ENCODE measurements at regions of chr5 and their contacts with region 1.

Region 1: GRCh38 chr5:40688127-40688761 is 8.5 kb downstream of the PTGER4 start:
- DNase-seq: peak; percentile 75 to 94 (median 84)
- ATAC-seq: peak; percentile 75
- H3K4me3 ChIP-seq: peak overlapping the region; percentile 91
- H3K4me3 Mint-ChIP-seq: peak overlapping the region; percentile 99
- H3K27ac ChIP-seq: peak overlapping the region in 1 of 2 donors; percentile 38
- H3K27ac Mint-ChIP-seq: peak overlapping the region; percentile 84
- H3K4me1 ChIP-seq: peaks cover 32% of the 10 kb centered on the region
- H3K4me1 Mint-ChIP-seq: peaks cover 84% of the 10 kb centered on the region
- H3K27me3 ChIP-seq: no peaks in the 10 kb centered on the region
- H3K27me3 Mint-ChIP-seq: no peaks in the 10 kb centered on the region
- CTCF ChIP-seq: peak; percentile 87

Region 2: DNA sequence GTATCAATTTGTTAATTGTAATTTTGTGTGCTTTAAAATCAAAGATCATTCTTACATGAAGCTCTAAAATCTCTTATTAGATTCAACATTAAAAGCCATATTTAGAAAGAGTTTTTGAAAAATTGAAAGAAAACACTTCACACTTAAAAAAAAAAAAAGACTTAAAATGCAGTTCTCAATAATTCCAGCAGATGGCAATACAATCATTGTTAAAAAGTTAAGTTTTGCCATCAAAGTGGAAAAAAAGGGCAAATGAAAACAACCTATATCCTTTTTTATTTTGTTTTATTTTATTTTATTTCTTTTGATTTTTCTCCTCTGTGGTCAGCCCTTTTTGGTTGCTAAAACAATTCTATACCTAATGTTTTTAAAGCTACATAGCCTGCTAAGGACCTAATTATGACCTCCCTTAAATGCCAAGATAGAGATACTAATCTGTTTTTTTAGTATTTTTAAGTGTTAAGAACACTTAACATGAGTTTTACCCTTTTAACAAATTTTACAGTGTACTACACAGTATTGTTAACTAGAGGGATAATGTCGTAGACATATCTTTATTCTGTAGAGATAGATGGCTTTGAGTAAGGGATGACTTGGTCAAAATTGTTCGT is 1109.3 kb before region 1 on chr5:
- CTCF ChIA-PET with region 1: no interaction called
- POLR2A ChIA-PET with region 1: no interaction called
- intact Hi-C with region 1: loop called in 1 of 2 experiments (anchors 2 kb)
- DNase-seq: peak in 3 of 14 experiments; percentile 21 to 52 (median 31)
- ATAC-seq: no peak
- H3K4me3 ChIP-seq: no peak overlapping the region
- H3K4me3 Mint-ChIP-seq: no peak overlapping the region
- H3K27ac ChIP-seq: no peak overlapping the region
- H3K27ac Mint-ChIP-seq: no peak overlapping the region
- H3K4me1 ChIP-seq: no peaks in the 10 kb centered on the region
- H3K4me1 Mint-ChIP-seq: peaks cover 10% of the 10 kb centered on the region
- H3K27me3 ChIP-seq: no peaks in the 10 kb centered on the region
- H3K27me3 Mint-ChIP-seq: peaks cover 6% of the 10 kb centered on the region
- CTCF ChIP-seq: peak; percentile 91

Region 3: GRCh38 chr5:39948867-39949468 is 739.3 kb before region 1 on chr5:
- CTCF ChIA-PET with region 1: interaction called, 4 read pairs
- POLR2A ChIA-PET with region 1: no interaction called
- intact Hi-C with region 1: loop called (anchors 1 kb)
- DNase-seq: peak; percentile 7 to 85 (median 50)
- ATAC-seq: peak; percentile 77
- H3K4me3 ChIP-seq: no peak overlapping the region
- H3K4me3 Mint-ChIP-seq: no peak overlapping the region
- H3K27ac ChIP-seq: no peak overlapping the region
- H3K27ac Mint-ChIP-seq: no peak overlapping the region
- H3K4me1 ChIP-seq: no peaks in the 10 kb centered on the region
- H3K4me1 Mint-ChIP-seq: peaks cover 5% of the 10 kb centered on the region
- H3K27me3 ChIP-seq: no peaks in the 10 kb centered on the region
- H3K27me3 Mint-ChIP-seq: no peaks in the 10 kb centered on the region
- CTCF ChIP-seq: peak; percentile 72

Region 4: GRCh38 chr5:40367255-40367654 is 321.0 kb before region 1 on chr5:
- CTCF ChIA-PET with region 1: interaction called, 7 read pairs
- POLR2A ChIA-PET with region 1: interaction called, 3 read pairs
- intact Hi-C with region 1: loop called (anchors 1 to 5 kb)
- DNase-seq: peak in 5 of 14 experiments; percentile 19 to 74 (median 43)
- ATAC-seq: peak; percentile 66
- H3K4me3 ChIP-seq: no peak overlapping the region
- H3K4me3 Mint-ChIP-seq: no peak overlapping the region
- H3K27ac ChIP-seq: no peak overlapping the region
- H3K27ac Mint-ChIP-seq: peak overlapping the region; percentile 17
- H3K4me1 ChIP-seq: no peaks in the 10 kb centered on the region
- H3K4me1 Mint-ChIP-seq: peaks cover 7% of the 10 kb centered on the region
- H3K27me3 ChIP-seq: no peaks in the 10 kb centered on the region
- H3K27me3 Mint-ChIP-seq: no peaks in the 10 kb centered on the region
- CTCF ChIP-seq: no peak

Region 5: GRCh38 chr5:40437452-40437861 is 250.8 kb before region 1 on chr5:
- CTCF ChIA-PET with region 1: interaction called, 6 read pairs
- POLR2A ChIA-PET with region 1: interaction called, 4 read pairs
- intact Hi-C with region 1: loop called in 1 of 2 experiments (anchors 5 kb)
- DNase-seq: peak in 5 of 14 experiments; percentile 5 to 74 (median 58)
- ATAC-seq: no peak
- H3K4me3 ChIP-seq: no peak overlapping the region
- H3K4me3 Mint-ChIP-seq: no peak overlapping the region
- H3K27ac ChIP-seq: peak overlapping the region; percentile 32 to 48
- H3K27ac Mint-ChIP-seq: peak overlapping the region; percentile 79
- H3K4me1 ChIP-seq: peaks cover 41% of the 10 kb centered on the region
- H3K4me1 Mint-ChIP-seq: peaks cover 68% of the 10 kb centered on the region
- H3K27me3 ChIP-seq: no peaks in the 10 kb centered on the region
- H3K27me3 Mint-ChIP-seq: no peaks in the 10 kb centered on the region
- CTCF ChIP-seq: no peak

Region 6: GRCh38 chr5:40570408-40571129 is 117.7 kb before region 1 on chr5:
- CTCF ChIA-PET with region 1: no interaction called
- POLR2A ChIA-PET with region 1: no interaction called
- intact Hi-C with region 1: no loop called
- DNase-seq: peak in 1 of 14 experiments; percentile 35
- ATAC-seq: no peak
- H3K4me3 ChIP-seq: no peak overlapping the region
- H3K4me3 Mint-ChIP-seq: no peak overlapping the region
- H3K27ac ChIP-seq: no peak overlapping the region
- H3K27ac Mint-ChIP-seq: no peak overlapping the region
- H3K4me1 ChIP-seq: no peaks in the 10 kb centered on the region
- H3K4me1 Mint-ChIP-seq: peaks cover 2% of the 10 kb centered on the region
- H3K27me3 ChIP-seq: no peaks in the 10 kb centered on the region
- H3K27me3 Mint-ChIP-seq: no peaks in the 10 kb centered on the region
- CTCF ChIP-seq: no peak

Region 7: GRCh38 chr5:40755407-40756365 is 67.4 kb after region 1 on chr5 and contains the start of gene TTC33:
- CTCF ChIA-PET with region 1: no interaction called
- POLR2A ChIA-PET with region 1: interaction called, 3 read pairs
- intact Hi-C with region 1: loop called (anchors 5 kb)
- DNase-seq: peak; percentile 86 to 96 (median 92)
- ATAC-seq: peak; percentile 80
- H3K4me3 ChIP-seq: peak within 1 kb of the TSS; percentile 89
- H3K4me3 Mint-ChIP-seq: no peak within 1 kb of the TSS
- H3K27ac ChIP-seq: peak within 1 kb of the TSS; percentile 87 to 89
- H3K27ac Mint-ChIP-seq: no peak within 1 kb of the TSS
- H3K4me1 ChIP-seq: peaks cover 14% of the 10 kb centered on the region
- H3K4me1 Mint-ChIP-seq: peaks cover 25% of the 10 kb centered on the region
- H3K27me3 ChIP-seq: no peaks in the 10 kb centered on the region
- H3K27me3 Mint-ChIP-seq: no peaks in the 10 kb centered on the region
- CTCF ChIP-seq: peak; percentile 51
- total RNA-seq, gene TTC33: 8.7 to 12.0 TPM

Region 8: GRCh38 chr5:41032973-41033372 is 344.7 kb after region 1 on chr5:
- CTCF ChIA-PET with region 1: no interaction called
- POLR2A ChIA-PET with region 1: no interaction called
- intact Hi-C with region 1: no loop called
- DNase-seq: no peak
- ATAC-seq: no peak
- H3K4me3 ChIP-seq: no peak overlapping the region
- H3K4me3 Mint-ChIP-seq: no peak overlapping the region
- H3K27ac ChIP-seq: no peak overlapping the region
- H3K27ac Mint-ChIP-seq: no peak overlapping the region
- H3K4me1 ChIP-seq: no peaks in the 10 kb centered on the region
- H3K4me1 Mint-ChIP-seq: no peaks in the 10 kb centered on the region
- H3K27me3 ChIP-seq: no peaks in the 10 kb centered on the region
- H3K27me3 Mint-ChIP-seq: no peaks in the 10 kb centered on the region
- CTCF ChIP-seq: no peak

Measured in CD4-positive, alpha-beta T cell (primary cell).